PC-3 (cell line): ENCODE measurements at regions of chr5 and their contacts with region 1.

Region 1: GRCh38 chr5:42767491-42768105 is 11.0 kb downstream of the CCDC152 start:
- DNase-seq: peak; percentile 74
- ATAC-seq: peak; percentile 57
- H3K4me3 ChIP-seq: no peak overlapping the region
- H3K27ac ChIP-seq: no peak overlapping the region
- H3K4me1 ChIP-seq: peaks cover 16% of the 10 kb centered on the region
- H3K27me3 ChIP-seq: no peaks in the 10 kb centered on the region
- CTCF ChIP-seq: peak; percentile 89

Region 2: DNA sequence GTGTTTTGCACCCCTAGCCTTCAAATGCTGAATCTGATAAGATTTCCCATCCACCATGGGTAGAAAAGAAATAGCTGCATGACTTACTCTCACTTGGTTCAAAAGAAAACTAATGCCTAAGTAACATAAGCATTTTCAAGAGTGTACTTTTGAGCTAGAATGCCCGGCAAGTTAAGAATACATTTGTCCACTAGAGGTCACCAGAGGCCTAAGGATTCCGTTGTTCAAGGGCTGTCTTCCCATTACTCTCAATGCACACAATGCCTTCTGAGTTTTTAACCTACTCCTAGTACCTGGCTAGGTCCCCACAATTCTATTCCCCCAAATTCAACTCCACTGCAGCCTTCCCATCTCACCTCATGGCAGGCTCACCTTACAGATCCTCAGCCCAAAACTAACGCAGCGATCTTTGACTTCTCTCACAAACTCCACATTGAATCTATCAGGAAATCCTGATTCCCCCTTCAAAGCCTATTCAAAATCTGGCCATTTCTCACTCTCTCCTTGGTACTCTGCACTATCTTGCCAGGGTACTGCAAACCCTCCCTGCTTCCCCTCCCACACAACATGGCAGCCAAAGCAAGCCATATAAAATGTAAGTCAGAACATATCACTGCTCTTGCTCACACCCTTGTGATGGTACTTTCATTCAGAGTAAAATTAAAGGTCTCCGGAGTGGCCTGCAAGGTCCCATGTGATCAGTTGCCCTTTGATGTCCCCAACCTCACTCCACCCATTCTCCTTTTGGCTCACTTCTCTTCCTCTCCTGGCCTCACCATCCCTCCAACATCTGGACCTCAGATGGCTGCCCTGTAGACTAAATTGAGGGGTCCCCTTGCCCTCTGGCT is 910.7 kb before region 1 on chr5:
- CTCF ChIA-PET with region 1: no interaction called
- POLR2A ChIA-PET with region 1: no interaction called
- intact Hi-C with region 1: loop called (anchors 2 kb)
- DNase-seq: peak; percentile 93
- ATAC-seq: peak; percentile 94
- H3K4me3 ChIP-seq: no peak overlapping the region
- H3K27ac ChIP-seq: no peak overlapping the region
- H3K4me1 ChIP-seq: no peaks in the 10 kb centered on the region
- H3K27me3 ChIP-seq: no peaks in the 10 kb centered on the region
- CTCF ChIP-seq: peak; percentile 95

Region 3: DNA sequence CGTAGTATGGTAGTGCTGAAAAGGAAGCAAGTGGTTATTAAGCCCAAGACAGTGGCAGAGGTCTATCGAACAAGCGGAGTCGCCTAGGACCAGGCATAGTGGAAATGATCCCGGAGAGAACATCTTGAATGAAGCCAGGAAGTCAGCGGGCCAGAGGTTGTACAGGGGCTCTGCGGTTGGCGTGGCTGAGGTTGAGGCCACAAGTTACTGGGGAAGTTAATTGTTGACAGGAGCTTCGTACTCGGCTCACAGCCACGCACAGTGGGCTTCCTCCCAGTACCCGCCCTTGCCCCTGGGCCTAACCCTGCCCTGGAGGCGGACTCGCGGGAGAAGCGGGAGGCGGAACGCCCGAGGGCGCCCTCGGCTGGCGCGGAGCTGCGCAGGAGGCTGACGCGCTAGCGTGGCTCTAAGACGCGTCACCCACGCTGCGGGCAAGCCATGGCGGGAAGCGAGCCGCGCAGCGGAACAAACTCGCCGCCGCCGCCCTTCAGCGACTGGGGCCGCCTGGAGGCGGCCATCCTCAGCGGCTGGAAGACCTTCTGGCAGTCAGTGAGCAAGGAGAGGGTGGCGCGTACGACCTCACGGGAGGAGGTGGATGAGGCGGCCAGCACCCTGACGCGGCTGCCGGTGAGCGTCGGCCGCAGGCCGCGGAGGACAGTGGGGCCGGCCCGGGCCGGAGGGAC is 842.6 kb before region 1 on chr5 and contains the start of gene FBXO4:
- CTCF ChIA-PET with region 1: no interaction called
- POLR2A ChIA-PET with region 1: no interaction called
- intact Hi-C with region 1: loop called (anchors 1 kb)
- DNase-seq: peak; percentile 89
- ATAC-seq: peak; percentile 93
- H3K4me3 ChIP-seq: peak within 1 kb of the TSS; percentile 84
- H3K27ac ChIP-seq: peak within 1 kb of the TSS; percentile 74
- H3K4me1 ChIP-seq: peaks cover 30% of the 10 kb centered on the region
- H3K27me3 ChIP-seq: no peaks in the 10 kb centered on the region
- CTCF ChIP-seq: peak; percentile 74
- total RNA-seq, gene FBXO4: 11.5 and 18.1 TPM in 2 replicates

Region 4: DNA sequence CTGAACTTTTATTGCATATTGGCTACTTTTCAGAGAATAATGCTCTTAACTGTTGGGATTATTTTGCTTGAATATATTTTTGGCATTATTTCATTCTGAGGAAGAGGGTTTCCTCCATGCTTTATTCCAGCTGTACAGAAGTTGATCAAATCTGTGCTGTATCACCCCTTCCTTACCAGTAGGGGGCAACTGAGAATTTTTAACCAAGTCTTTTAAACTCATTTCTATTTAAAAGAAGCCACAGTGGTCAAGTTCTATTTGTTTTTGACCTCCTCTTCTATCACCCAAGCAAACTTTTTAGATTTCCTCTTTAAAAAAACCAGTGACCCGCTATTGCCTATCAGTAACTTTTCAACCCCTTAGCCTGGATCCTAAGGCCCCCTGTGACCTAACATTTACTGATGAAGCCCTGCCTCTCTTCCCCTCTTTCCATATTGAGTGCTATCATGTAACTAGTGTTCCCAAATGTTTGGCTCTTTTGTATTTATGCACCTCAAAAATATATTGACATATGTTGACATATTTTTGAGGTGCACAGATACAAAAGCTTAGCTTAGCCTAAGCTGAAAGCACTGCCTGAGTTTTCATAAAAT is 761.9 kb before region 1 on chr5:
- CTCF ChIA-PET with region 1: no interaction called
- POLR2A ChIA-PET with region 1: no interaction called
- intact Hi-C with region 1: loop called (anchors 5 kb)
- DNase-seq: peak; percentile 62
- ATAC-seq: peak; percentile 49
- H3K4me3 ChIP-seq: no peak overlapping the region
- H3K27ac ChIP-seq: no peak overlapping the region
- H3K4me1 ChIP-seq: no peaks in the 10 kb centered on the region
- H3K27me3 ChIP-seq: no peaks in the 10 kb centered on the region
- CTCF ChIP-seq: peak; percentile 88

Region 5: DNA sequence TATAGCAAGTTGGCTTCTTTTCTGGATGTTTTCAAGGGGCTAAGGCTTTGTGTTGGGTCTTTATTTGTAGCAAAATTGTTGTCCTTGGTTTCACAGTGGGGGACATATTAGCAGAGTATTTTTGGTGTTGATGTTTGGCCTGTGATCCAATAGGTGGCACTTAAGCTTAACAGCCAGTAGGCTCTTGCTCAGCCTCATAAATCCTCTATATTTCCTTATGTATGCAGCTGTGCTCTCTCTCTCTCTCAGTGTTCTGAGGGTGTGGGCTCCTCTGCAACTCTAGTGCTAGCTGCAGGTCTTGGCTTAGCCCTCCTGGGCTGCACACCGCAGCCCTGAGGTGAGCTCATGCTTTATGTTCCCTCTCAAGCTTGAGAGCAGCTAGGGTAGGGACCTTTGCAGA is 539.3 kb before region 1 on chr5:
- CTCF ChIA-PET with region 1: no interaction called
- POLR2A ChIA-PET with region 1: no interaction called
- intact Hi-C with region 1: loop called (anchors 2 kb)
- DNase-seq: peak; percentile 69
- ATAC-seq: peak; percentile 98
- H3K4me3 ChIP-seq: no peak overlapping the region
- H3K27ac ChIP-seq: no peak overlapping the region
- H3K4me1 ChIP-seq: peaks cover 5% of the 10 kb centered on the region; the same call in 1 of the 2 replicates
- H3K27me3 ChIP-seq: no peaks in the 10 kb centered on the region
- CTCF ChIP-seq: peak; percentile 78

Region 6: DNA sequence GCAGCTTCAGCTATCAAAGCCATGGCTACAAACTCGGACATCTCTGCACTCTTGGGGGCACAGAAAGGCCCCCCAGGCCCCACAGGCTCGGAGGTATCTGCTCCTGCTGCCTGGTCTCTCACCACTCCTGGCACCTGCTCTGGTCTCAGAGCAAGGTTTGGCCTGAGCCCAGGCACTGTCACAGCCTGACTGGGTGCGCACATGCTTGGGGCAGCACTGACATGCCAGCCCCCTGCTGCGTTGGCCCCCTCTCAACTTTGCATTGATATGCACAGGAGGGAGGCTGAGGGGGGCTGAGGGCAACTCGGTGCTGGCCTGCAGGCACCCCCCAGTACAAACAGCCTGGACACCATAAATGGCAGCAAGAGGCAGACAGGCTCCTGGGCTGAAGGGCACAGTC is 371.5 kb before region 1 on chr5:
- CTCF ChIA-PET with region 1: no interaction called
- POLR2A ChIA-PET with region 1: no interaction called
- intact Hi-C with region 1: no loop called
- DNase-seq: no peak
- ATAC-seq: no peak
- H3K4me3 ChIP-seq: no peak overlapping the region
- H3K27ac ChIP-seq: no peak overlapping the region
- H3K4me1 ChIP-seq: no peaks in the 10 kb centered on the region
- H3K27me3 ChIP-seq: no peaks in the 10 kb centered on the region
- CTCF ChIP-seq: no peak

Region 7: GRCh38 chr5:42656651-42657015 is 111.0 kb before region 1 on chr5:
- CTCF ChIA-PET with region 1: interaction called, 4 read pairs
- POLR2A ChIA-PET with region 1: no interaction called
- intact Hi-C with region 1: loop called (anchors 2 kb)
- DNase-seq: peak; percentile 58
- ATAC-seq: peak; percentile 80
- H3K4me3 ChIP-seq: peak overlapping the region; percentile 44
- H3K27ac ChIP-seq: no peak overlapping the region
- H3K4me1 ChIP-seq: peaks cover 7% of the 10 kb centered on the region; the same call in 1 of the 2 replicates
- H3K27me3 ChIP-seq: no peaks in the 10 kb centered on the region
- CTCF ChIP-seq: peak; percentile 76

Region 8: DNA sequence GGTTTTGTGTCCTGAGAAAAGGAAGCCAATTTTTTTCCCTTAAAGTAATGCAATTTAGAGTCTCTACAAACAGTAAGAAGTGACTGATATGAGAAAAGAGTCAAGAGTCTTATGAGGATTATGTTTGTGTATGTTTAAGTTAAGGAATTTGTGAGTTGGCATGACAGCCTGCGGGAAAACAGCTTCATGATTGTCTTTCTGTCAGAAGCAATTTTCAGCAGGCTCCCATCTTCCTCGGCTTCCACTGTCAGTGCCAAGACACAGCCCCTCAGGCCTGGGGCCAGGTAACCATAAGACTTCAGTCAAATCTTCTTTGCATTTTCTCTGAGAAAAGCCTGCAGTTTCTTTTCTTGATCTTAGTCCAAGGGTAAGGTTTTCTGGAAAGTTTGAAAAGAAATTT is 61.1 kb after region 1 on chr5:
- CTCF ChIA-PET with region 1: no interaction called
- POLR2A ChIA-PET with region 1: no interaction called
- intact Hi-C with region 1: no loop called
- DNase-seq: no peak
- ATAC-seq: no peak
- H3K4me3 ChIP-seq: no peak overlapping the region
- H3K27ac ChIP-seq: no peak overlapping the region
- H3K4me1 ChIP-seq: no peaks in the 10 kb centered on the region
- H3K27me3 ChIP-seq: no peaks in the 10 kb centered on the region
- CTCF ChIP-seq: no peak

Region 9: GRCh38 chr5:42889311-42889933 is 121.8 kb after region 1 on chr5:
- CTCF ChIA-PET with region 1: interaction called, 8 read pairs
- POLR2A ChIA-PET with region 1: no interaction called
- intact Hi-C with region 1: loop called (anchors 1 kb)
- DNase-seq: peak; percentile 96
- ATAC-seq: peak; percentile 89
- H3K4me3 ChIP-seq: no peak overlapping the region
- H3K27ac ChIP-seq: no peak overlapping the region
- H3K4me1 ChIP-seq: peaks cover 20% of the 10 kb centered on the region
- H3K27me3 ChIP-seq: no peaks in the 10 kb centered on the region
- CTCF ChIP-seq: peak; percentile 97